ENCODE measurements at regions of chr6 and their contacts with region 1.

Region 1: DNA sequence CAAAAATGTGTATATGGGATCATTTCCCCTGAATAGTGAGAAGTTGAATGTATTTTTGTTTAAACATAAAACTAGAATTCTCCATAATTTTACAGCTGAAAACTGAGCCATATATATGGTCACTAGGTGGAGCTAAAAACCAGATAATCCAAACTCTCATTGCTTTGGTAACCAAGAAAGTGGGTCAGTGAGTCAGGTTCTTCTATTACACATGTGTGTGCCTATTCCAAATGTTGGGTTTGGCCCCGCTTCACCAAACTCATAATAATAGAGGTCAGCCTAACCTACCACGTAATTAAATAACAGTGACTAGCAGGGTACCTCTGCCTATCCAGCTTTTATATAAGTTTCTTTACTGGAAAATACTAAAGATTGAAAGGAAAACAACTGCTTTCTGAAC is 19.3 kb upstream of the RNGTT start:
- DNase-seq: peak; percentile 55
- ATAC-seq: peak; percentile 65
- H3K4me3 ChIP-seq: no peak overlapping the region
- H3K27ac ChIP-seq: no peak overlapping the region
- H3K4me1 ChIP-seq: peaks cover 25% of the 10 kb centered on the region
- H3K27me3 ChIP-seq: no peaks in the 10 kb centered on the region; a peak in 1 of 5 replicates
- CTCF ChIP-seq: peak; percentile 79
- EP300 ChIP-seq: no peak
- POLR2A ChIP-seq: no peak
- RAD21 ChIP-seq: peak; percentile 74; the same call in 1 of the 2 replicates

Region 2: GRCh38 chr6:89035252-89036106 is 52.8 kb after region 1 on chr6:
- CTCF ChIA-PET with region 1: no interaction called
- POLR2A ChIA-PET with region 1: interaction called, 4 read pairs
- in situ Hi-C with region 1: no loop called
- intact Hi-C with region 1: loop called (anchors 2 kb)
- DNase-seq: peak; percentile 73
- ATAC-seq: peak; percentile 87
- H3K4me3 ChIP-seq: peak overlapping the region; percentile 20 to 69 (median 59)
- H3K27ac ChIP-seq: peak overlapping the region; percentile 73
- H3K4me1 ChIP-seq: peaks cover 35% of the 10 kb centered on the region
- H3K27me3 ChIP-seq: no peaks in the 10 kb centered on the region; a peak in 1 of 5 replicates
- CTCF ChIP-seq: no peak
- EP300 ChIP-seq: peak in 1 of 2 experiments; percentile 28; a peak in 1 of 4 replicates
- POLR2A ChIP-seq: peak in 1 of 2 experiments; percentile 53; a peak in 2 of 4 replicates
- RAD21 ChIP-seq: no peak

Region 3: DNA sequence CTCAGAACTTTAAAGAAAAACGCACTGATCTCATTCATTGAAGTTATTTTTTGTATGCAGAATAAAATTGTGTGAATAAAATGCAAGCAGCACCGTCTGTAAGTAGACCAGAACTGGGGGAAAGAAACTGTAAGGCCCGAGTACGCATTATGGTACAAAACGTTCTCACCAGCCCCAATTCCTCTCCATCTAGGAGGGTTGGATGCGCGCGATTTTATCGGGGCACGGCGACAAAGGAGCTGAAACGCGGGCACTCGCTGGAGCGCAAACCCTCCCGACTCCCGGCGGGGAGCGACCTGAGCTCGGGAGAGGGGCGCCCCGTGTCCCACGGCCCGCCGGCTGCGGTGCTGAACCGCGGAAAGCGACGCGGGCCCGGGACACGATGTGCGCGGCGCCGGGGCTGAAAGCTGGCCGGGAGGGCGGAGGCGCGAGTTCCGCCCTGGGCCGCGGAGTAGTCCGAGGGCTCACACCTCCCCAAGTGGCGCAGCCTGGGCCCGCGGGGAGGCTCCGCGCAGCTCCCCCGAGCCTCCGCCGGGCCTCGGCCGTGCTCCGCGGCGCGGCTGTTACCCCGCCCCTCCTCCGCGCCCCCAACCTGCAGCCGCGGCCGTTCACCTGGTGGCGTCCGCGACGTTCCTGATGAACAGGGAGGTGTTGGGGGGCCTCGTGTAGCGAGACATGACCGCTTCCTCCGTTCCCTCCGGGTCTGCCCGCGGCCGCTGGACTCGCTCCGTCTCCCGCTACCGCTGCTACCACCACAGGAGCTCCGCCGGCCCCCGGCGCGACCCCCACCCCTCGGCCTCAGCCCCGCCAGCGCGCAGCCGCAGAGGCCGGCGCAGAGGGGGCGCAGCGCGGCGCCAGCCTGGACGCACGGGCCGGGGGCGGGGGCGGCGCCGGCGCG is 134.7 kb after region 1 on chr6 and contains the start of gene SRSF12:
- CTCF ChIA-PET with region 1: interaction called, 5 read pairs
- POLR2A ChIA-PET with region 1: interaction called, 3 read pairs
- in situ Hi-C with region 1: no loop called
- intact Hi-C with region 1: loop called (anchors 1 kb)
- DNase-seq: no peak
- ATAC-seq: peak; percentile 91
- H3K4me3 ChIP-seq: peak within 1 kb of the TSS; percentile 64 to 79 (median 78)
- H3K27ac ChIP-seq: no peak within 1 kb of the TSS
- H3K4me1 ChIP-seq: peaks cover 38% of the 10 kb centered on the region
- H3K27me3 ChIP-seq: no peaks in the 10 kb centered on the region
- CTCF ChIP-seq: peak; percentile 13; the same call in 1 of the 2 replicates
- EP300 ChIP-seq: no peak
- POLR2A ChIP-seq: no peak
- RAD21 ChIP-seq: no peak
- total RNA-seq, gene SRSF12: 1.9 TPM in 2 replicates

Region 4: GRCh38 chr6:89122625-89123024 is 139.9 kb after region 1 on chr6:
- CTCF ChIA-PET with region 1: interaction called, 5 read pairs
- POLR2A ChIA-PET with region 1: no interaction called
- in situ Hi-C with region 1: no loop called
- intact Hi-C with region 1: loop called (anchors 1 kb)
- DNase-seq: peak; percentile 53
- ATAC-seq: peak; percentile 67
- H3K4me3 ChIP-seq: no peak overlapping the region
- H3K27ac ChIP-seq: no peak overlapping the region
- H3K4me1 ChIP-seq: peaks cover 25% of the 10 kb centered on the region
- H3K27me3 ChIP-seq: no peaks in the 10 kb centered on the region
- CTCF ChIP-seq: peak; percentile 78
- EP300 ChIP-seq: no peak
- POLR2A ChIP-seq: no peak
- RAD21 ChIP-seq: peak; percentile 54; the same call in 1 of the 2 replicates

Region 5: DNA sequence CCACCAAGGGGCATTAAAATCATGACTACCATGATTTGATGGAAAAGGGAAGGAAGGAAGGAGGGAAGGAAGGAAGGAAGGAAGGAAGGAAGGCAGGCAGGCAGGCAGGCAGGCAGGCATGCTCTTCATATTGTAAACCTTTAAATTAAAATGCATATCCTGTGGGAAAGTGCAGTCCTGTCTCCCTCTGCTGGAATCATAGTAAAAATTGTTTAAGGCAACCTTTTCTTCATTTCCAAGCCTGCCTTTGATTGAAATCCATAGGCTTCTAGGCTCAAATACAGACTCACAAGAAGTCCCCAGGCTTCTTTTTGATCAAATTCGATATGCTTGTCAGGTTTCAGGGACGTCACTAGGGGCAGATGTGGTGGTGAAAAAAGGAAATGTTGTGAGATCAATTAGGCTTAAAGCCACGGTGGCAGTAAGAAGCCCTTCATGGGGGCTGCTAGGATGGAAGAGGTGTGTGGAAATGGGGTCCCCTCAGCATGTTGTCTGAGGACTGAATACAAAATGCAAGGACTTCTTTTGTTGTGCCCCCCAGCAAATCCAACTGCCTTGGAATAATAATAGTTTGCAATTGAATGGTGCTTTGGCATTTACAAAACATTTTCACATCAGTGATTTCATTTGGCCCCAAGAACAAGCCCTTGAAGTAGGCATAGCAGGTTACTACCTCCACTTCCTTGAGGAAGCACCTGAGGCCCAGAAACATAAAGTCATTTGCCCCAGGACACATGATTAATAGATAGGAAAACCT is 260.0 kb after region 1 on chr6:
- CTCF ChIA-PET with region 1: interaction called, 33 read pairs
- POLR2A ChIA-PET with region 1: interaction called, 4 read pairs
- in situ Hi-C with region 1: loop called (anchors 5 kb)
- intact Hi-C with region 1: loop called (anchors 1 kb)
- DNase-seq: peak; percentile 44
- ATAC-seq: peak; percentile 75
- H3K4me3 ChIP-seq: no peak overlapping the region
- H3K27ac ChIP-seq: no peak overlapping the region
- H3K4me1 ChIP-seq: no peaks in the 10 kb centered on the region
- H3K27me3 ChIP-seq: no peaks in the 10 kb centered on the region
- CTCF ChIP-seq: peak; percentile 77
- EP300 ChIP-seq: no peak
- POLR2A ChIP-seq: no peak
- RAD21 ChIP-seq: peak; percentile 68

Region 6: DNA sequence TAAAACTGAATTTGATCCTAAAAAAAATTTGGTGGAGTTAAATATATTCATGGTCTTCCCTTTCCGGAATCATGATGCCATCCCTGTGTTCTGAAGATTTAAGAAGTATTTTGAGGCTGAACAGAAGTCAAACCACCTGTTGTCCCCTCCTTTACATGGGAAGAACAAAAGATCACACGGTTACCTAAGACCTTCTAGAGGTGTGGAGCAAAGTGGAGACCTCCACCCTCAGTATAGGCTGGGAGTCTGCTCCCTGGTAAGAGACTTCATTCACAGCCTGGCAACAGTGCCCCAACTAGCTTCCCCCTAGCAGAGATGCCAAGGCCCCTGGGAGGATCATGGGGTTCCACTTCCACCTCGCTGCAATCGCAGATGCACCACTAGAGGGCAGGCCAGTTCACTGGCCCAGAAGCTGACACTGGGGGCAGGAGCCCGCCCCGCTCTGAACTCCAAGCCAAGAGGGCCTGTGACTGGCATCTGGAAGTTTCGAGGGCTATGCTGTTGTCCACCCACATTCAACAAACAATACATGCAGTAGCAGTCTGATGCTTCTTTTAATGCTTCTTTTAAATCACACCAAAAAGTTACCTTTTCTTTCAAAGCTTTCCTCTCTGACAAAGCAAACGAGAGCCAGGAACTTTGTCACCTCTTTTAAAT is 389.3 kb after region 1 on chr6:
- CTCF ChIA-PET with region 1: no interaction called
- POLR2A ChIA-PET with region 1: no interaction called
- in situ Hi-C with region 1: no loop called
- intact Hi-C with region 1: loop called (anchors 10 kb)
- DNase-seq: peak; percentile 47
- ATAC-seq: peak; percentile 94
- H3K4me3 ChIP-seq: no peak overlapping the region
- H3K27ac ChIP-seq: no peak overlapping the region
- H3K4me1 ChIP-seq: 0 out of 2 replicates have a peak, but pooled peaks cover 7% of the 10 kb centered on the region
- H3K27me3 ChIP-seq: no peaks in the 10 kb centered on the region
- CTCF ChIP-seq: peak; percentile 92
- EP300 ChIP-seq: no peak
- POLR2A ChIP-seq: no peak
- RAD21 ChIP-seq: 0 out of 2 replicates have a peak, but pooled peaks have one; percentile 27

Measured in HepG2 (cell line).